CD14-positive monocyte (primary cell): ENCODE measurements at regions of chr12 and their contacts with region 1.

Region 1: GRCh38 chr12:29200586-29200985 is 51.5 kb downstream of the FAR2 start:
- DNase-seq: no peak
- H3K4me3 ChIP-seq: no peak overlapping the region
- H3K4me3 Mint-ChIP-seq: no peak overlapping the region
- H3K27ac ChIP-seq: no peak overlapping the region
- H3K27ac Mint-ChIP-seq: no peak overlapping the region
- H3K4me1 ChIP-seq: peaks cover 11 to 14% of the 10 kb centered on the region in 2 donors
- H3K4me1 Mint-ChIP-seq: peaks cover 15% of the 10 kb centered on the region
- H3K27me3 ChIP-seq: no peaks in the 10 kb centered on the region
- H3K27me3 Mint-ChIP-seq: peaks cover 0 to 3% (median 0%) of the 10 kb centered on the region in 3 donors
- CTCF ChIP-seq: no peak

Region 2: GRCh38 chr12:29023436-29024076 is 177.0 kb before region 1 on chr12:
- intact Hi-C with region 1: no loop called
- DNase-seq: no peak
- H3K4me3 ChIP-seq: no peak overlapping the region
- H3K4me3 Mint-ChIP-seq: no peak overlapping the region
- H3K27ac ChIP-seq: no peak overlapping the region
- H3K27ac Mint-ChIP-seq: no peak overlapping the region
- H3K4me1 ChIP-seq: no peaks in the 10 kb centered on the region
- H3K4me1 Mint-ChIP-seq: no peaks in the 10 kb centered on the region
- H3K27me3 ChIP-seq: no peaks in the 10 kb centered on the region
- H3K27me3 Mint-ChIP-seq: no peaks in the 10 kb centered on the region
- CTCF ChIP-seq: no peak

Region 3: GRCh38 chr12:29164477-29165393 is 35.9 kb before region 1 on chr12:
- intact Hi-C with region 1: loop called (anchors 5 to 10 kb)
- DNase-seq: peak; percentile 79 to 95 (median 91)
- H3K4me3 ChIP-seq: peak overlapping the region in 2 of 3 experiments; percentile 19 to 21
- H3K4me3 Mint-ChIP-seq: peak overlapping the region in 1 of 2 donors; percentile 75
- H3K27ac ChIP-seq: peak overlapping the region; percentile 91 to 98
- H3K27ac Mint-ChIP-seq: peak overlapping the region; percentile 98 to 100 (median 100)
- H3K4me1 ChIP-seq: peaks cover 69 to 83% of the 10 kb centered on the region in 2 donors
- H3K4me1 Mint-ChIP-seq: peaks cover 75% of the 10 kb centered on the region
- H3K27me3 ChIP-seq: no peaks in the 10 kb centered on the region
- H3K27me3 Mint-ChIP-seq: peaks cover 0 to 4% (median 2%) of the 10 kb centered on the region in 3 donors
- CTCF ChIP-seq: no peak